Naive thymus-derived CD4-positive, alpha-beta T cell (primary cell): ENCODE measurements at regions of chr3 and their contacts with region 1.

Region 1: GRCh38 chr3:197791113-197791891 is at the start of gene LRCH3:
- DNase-seq: peak; percentile 71 to 92 (median 82)
- ATAC-seq: peak; percentile 81
- H3K4me3 ChIP-seq: peak within 1 kb of the TSS; percentile 69
- H3K4me3 Mint-ChIP-seq: peak within 1 kb of the TSS; percentile 91 to 99 (median 96)
- H3K27ac ChIP-seq: peak within 1 kb of the TSS; percentile 97
- H3K27ac Mint-ChIP-seq: peak within 1 kb of the TSS; percentile 95 to 100 (median 97)
- H3K4me1 ChIP-seq: peaks cover 6 to 17% of the 10 kb centered on the region in 2 donors
- H3K4me1 Mint-ChIP-seq: peaks cover 20 to 54% (median 45%) of the 10 kb centered on the region in 7 donors
- H3K27me3 ChIP-seq: no peaks in the 10 kb centered on the region
- H3K27me3 Mint-ChIP-seq: peaks cover 0 to 1% (median 0%) of the 10 kb centered on the region in 5 donors
- total RNA-seq, gene LRCH3: 43.5 to 75.5 (median 68.5) TPM

Region 2: DNA sequence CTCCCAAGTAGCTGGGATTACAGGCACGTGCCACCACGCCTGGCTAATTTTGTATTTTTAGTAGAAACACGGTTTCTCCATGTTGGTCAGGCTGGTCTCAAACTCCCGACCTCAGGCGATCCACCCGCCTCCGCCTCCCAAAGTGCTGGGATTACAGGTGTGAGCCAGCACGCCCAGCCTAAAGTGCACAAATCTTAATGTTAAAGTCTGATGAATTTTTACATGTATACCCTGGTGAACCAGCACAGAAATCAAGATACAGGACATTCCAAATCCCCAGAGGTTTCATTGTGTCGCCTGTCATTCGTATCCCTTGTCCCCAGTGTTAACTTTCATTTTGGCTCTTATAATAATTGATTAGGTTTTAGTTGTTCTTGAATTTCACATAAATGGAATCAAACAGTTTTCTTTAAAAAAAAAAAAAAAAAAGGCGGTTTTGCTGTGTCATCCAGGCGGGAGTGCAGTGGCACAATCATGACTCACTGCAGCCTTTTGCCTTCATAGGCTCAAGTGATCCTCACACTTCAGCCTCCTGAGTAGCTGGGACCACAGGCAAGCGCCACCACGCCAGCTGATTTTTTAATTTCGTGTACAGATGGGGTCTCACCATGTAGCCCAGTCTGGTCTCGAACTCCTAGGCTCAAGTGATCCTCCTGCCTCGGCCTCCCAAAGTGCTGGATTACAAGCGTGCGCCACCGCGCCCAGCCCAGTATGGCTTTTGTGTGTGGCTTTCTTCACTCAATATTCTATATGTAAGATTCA is 1451.6 kb before region 1 on chr3:
- CTCF ChIA-PET with region 1: no interaction called
- POLR2A ChIA-PET with region 1: no interaction called
- intact Hi-C with region 1: no loop called
- DNase-seq: no peak
- ATAC-seq: peak; percentile 35
- H3K4me3 ChIP-seq: no peak overlapping the region
- H3K4me3 Mint-ChIP-seq: no peak overlapping the region
- H3K27ac ChIP-seq: no peak overlapping the region
- H3K27ac Mint-ChIP-seq: no peak overlapping the region
- H3K4me1 ChIP-seq: no peaks in the 10 kb centered on the region
- H3K4me1 Mint-ChIP-seq: peaks cover 0 to 1% (median 0%) of the 10 kb centered on the region in 7 donors
- H3K27me3 ChIP-seq: no peaks in the 10 kb centered on the region
- H3K27me3 Mint-ChIP-seq: peaks cover 0 to 8% (median 0%) of the 10 kb centered on the region in 5 donors

Region 3: DNA sequence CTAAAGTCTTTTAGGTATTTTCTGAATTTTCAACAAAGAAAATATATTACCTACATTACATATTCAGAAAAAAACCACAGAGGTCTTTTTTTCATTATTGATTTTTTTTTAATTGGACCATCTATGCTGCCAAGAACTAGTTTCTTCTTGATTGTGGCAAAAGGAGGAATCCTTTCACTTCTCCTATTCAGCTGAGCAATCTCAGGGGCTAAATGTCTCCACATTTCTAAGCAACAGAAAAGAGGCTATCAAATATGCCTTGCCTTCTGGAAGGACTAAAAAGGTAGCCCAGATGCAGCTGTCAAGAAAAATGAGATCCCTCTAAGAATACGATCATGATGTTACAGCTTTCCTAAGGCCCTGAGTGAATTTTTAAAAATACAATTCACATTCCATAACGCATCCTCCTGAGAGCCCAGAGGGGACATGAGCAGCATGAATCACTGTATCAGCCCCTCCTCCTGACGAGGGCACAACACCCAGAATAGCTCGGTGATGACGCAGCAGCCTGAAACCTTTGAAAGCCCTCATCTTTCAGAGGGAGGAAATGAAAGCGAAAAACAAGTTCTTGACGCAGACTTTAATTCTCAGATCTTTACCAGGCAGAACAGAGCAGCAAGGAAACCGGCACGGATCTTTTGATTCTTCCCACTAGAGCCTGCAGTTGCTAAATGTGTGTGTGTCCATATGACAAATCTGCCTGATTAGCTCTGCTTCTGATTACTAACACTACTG is 79.2 kb before region 1 on chr3:
- CTCF ChIA-PET with region 1: no interaction called
- POLR2A ChIA-PET with region 1: interaction called, 22 read pairs
- intact Hi-C with region 1: loop called (anchors 1 kb)
- DNase-seq: peak; percentile 56 to 95 (median 91)
- ATAC-seq: peak; percentile 99
- H3K4me3 ChIP-seq: peak overlapping the region; percentile 58
- H3K4me3 Mint-ChIP-seq: peak overlapping the region; percentile 65 to 92 (median 80)
- H3K27ac ChIP-seq: peak overlapping the region; percentile 82
- H3K27ac Mint-ChIP-seq: peak overlapping the region; percentile 91 to 99 (median 97)
- H3K4me1 ChIP-seq: peaks cover 14 to 15% of the 10 kb centered on the region in 2 donors
- H3K4me1 Mint-ChIP-seq: peaks cover 7 to 37% (median 26%) of the 10 kb centered on the region in 7 donors
- H3K27me3 ChIP-seq: no peaks in the 10 kb centered on the region
- H3K27me3 Mint-ChIP-seq: no peaks in the 10 kb centered on the region

Region 4: GRCh38 chr3:197736491-197737318 is 54.6 kb before region 1 on chr3 and contains the start of gene RUBCN:
- CTCF ChIA-PET with region 1: no interaction called
- POLR2A ChIA-PET with region 1: interaction called, 3 read pairs
- intact Hi-C with region 1: loop called (anchors 1 kb)
- DNase-seq: peak; percentile 81 to 95 (median 93)
- ATAC-seq: peak; percentile 98
- H3K4me3 ChIP-seq: peak within 1 kb of the TSS; percentile 67
- H3K4me3 Mint-ChIP-seq: peak within 1 kb of the TSS; percentile 82 to 99 (median 96)
- H3K27ac ChIP-seq: peak within 1 kb of the TSS; percentile 83
- H3K27ac Mint-ChIP-seq: peak within 1 kb of the TSS; percentile 89 to 99 (median 97)
- H3K4me1 ChIP-seq: peaks cover 9 to 10% of the 10 kb centered on the region in 2 donors
- H3K4me1 Mint-ChIP-seq: peaks cover 29 to 52% (median 32%) of the 10 kb centered on the region in 7 donors
- H3K27me3 ChIP-seq: no peaks in the 10 kb centered on the region
- H3K27me3 Mint-ChIP-seq: no peaks in the 10 kb centered on the region
- total RNA-seq, gene RUBCN: 43.3 to 61.7 (median 52.9) TPM

Region 5: GRCh38 chr3:197801891-197802778 is 10.8 kb after region 1 on chr3:
- CTCF ChIA-PET with region 1: no interaction called
- POLR2A ChIA-PET with region 1: interaction called, 4 read pairs
- intact Hi-C with region 1: loop called (anchors 1 kb)
- DNase-seq: peak in 5 of 9 donors; percentile 30 to 39 (median 34)
- ATAC-seq: peak; percentile 78
- H3K4me3 ChIP-seq: no peak overlapping the region
- H3K4me3 Mint-ChIP-seq: peak overlapping the region in 7 of 10 donors; percentile 12 to 35 (median 19)
- H3K27ac ChIP-seq: no peak overlapping the region
- H3K27ac Mint-ChIP-seq: peak overlapping the region; percentile 44 to 81 (median 57)
- H3K4me1 ChIP-seq: peaks cover 13 to 21% of the 10 kb centered on the region in 2 donors
- H3K4me1 Mint-ChIP-seq: peaks cover 35 to 59% (median 53%) of the 10 kb centered on the region in 7 donors
- H3K27me3 ChIP-seq: no peaks in the 10 kb centered on the region
- H3K27me3 Mint-ChIP-seq: no peaks in the 10 kb centered on the region

Region 6: DNA sequence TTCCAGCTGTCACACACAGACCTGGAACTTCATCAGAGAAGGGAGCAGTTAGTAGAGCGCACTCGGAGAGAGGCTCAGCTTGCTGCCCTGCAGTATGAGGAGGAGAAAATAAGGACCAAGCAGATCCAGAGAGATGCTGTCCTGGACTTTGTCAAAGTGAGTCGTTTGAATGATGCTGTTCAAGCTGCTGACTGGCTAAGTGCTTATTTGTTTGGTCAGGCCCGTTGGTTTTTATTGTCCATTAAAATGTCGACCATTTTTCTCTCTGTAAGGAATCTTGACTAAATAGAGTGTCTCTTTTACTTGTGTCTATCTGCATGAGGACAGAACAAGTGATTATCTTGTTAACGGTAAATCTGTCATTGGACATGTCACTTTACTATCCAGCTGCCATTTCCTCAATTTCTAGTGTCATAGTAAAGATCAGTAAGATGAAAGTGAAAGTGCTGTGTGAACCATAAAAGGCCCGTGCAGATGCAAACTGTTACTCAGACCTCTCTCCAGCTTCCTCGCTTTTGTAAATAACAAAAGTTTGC is 56.6 kb after region 1 on chr3:
- CTCF ChIA-PET with region 1: interaction called, 3 read pairs
- POLR2A ChIA-PET with region 1: interaction called, 7 read pairs
- intact Hi-C with region 1: loop called (anchors 5 kb)
- DNase-seq: peak in 7 of 9 donors; percentile 33 to 65 (median 53)
- ATAC-seq: peak; percentile 92
- H3K4me3 ChIP-seq: peak overlapping the region; percentile 49
- H3K4me3 Mint-ChIP-seq: peak overlapping the region; percentile 58 to 93 (median 86)
- H3K27ac ChIP-seq: peak overlapping the region; percentile 67
- H3K27ac Mint-ChIP-seq: peak overlapping the region; percentile 88 to 98 (median 93)
- H3K4me1 ChIP-seq: peaks cover 3 to 8% of the 10 kb centered on the region in 2 donors
- H3K4me1 Mint-ChIP-seq: peaks cover 18 to 30% (median 26%) of the 10 kb centered on the region in 7 donors
- H3K27me3 ChIP-seq: no peaks in the 10 kb centered on the region
- H3K27me3 Mint-ChIP-seq: no peaks in the 10 kb centered on the region

Region 7: DNA sequence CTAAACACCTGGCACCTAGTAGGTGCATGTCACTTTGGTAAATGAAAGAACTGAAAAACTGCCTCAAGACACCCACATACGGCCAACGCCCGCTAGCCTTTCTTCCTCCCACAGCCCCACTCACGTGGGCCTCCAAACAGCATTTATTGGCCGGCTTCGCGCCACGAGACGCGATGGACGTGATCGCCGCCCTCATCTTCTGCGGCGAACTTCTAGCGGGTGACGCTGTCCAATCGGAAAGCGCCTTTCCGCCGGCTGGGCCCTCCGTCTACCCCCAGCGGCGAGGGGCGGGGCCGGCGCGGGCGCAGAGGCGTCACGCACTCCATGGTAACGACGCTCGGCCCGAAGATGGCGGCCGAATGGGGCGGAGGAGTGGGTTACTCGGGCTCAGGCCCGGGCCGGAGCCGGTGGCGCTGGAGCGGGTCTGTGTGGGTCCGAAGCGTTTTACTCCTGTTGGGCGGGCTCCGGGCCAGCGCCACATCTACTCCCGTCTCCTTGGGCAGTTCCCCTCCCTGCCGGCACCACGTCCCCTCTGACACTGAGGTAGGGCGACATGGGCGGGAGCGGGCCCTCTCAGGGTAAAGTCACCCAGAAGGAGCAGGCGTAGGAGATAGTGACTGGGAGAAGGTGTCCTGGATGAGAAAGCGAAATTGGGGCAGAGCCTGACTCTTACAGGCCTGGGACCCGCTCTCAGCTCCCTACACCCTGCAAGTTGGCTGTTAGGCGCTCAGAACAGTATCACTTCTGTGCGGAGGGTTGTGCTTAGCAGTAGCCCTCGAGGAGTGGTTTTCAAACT is 168.8 kb after region 1 on chr3 and contains the start of gene LMLN:
- CTCF ChIA-PET with region 1: no interaction called
- POLR2A ChIA-PET with region 1: no interaction called
- intact Hi-C with region 1: loop called (anchors 2 to 10 kb)
- DNase-seq: peak; percentile 93 to 96 (median 95)
- ATAC-seq: peak; percentile 98
- H3K4me3 ChIP-seq: peak within 1 kb of the TSS; percentile 91
- H3K4me3 Mint-ChIP-seq: peak within 1 kb of the TSS; percentile 86 to 98 (median 92)
- H3K27ac ChIP-seq: peak within 1 kb of the TSS; percentile 86
- H3K27ac Mint-ChIP-seq: peak within 1 kb of the TSS; percentile 92 to 97 (median 96)
- H3K4me1 ChIP-seq: peaks cover 26 to 27% of the 10 kb centered on the region in 2 donors
- H3K4me1 Mint-ChIP-seq: peaks cover 33 to 74% (median 48%) of the 10 kb centered on the region in 7 donors
- H3K27me3 ChIP-seq: no peaks in the 10 kb centered on the region
- H3K27me3 Mint-ChIP-seq: peaks cover 0 to 2% (median 0%) of the 10 kb centered on the region in 5 donors
- total RNA-seq, gene LMLN: 4.2 to 10.9 (median 6.8) TPM